ENCODE measurements at regions of chr7 and their contacts with region 1.

Region 1: GRCh38 chr7:151519765-151520418 is at the start of gene RHEB:
- DNase-seq: peak; percentile 99
- H3K4me3 Mint-ChIP-seq: peak within 1 kb of the TSS; percentile 97
- H3K27ac Mint-ChIP-seq: peak within 1 kb of the TSS; percentile 97
- H3K4me1 Mint-ChIP-seq: peaks cover 36% of the 10 kb centered on the region
- H3K27me3 Mint-ChIP-seq: peaks cover 9% of the 10 kb centered on the region
- total RNA-seq, gene RHEB: 55.4 and 62.5 TPM in 2 replicates

Region 2: DNA sequence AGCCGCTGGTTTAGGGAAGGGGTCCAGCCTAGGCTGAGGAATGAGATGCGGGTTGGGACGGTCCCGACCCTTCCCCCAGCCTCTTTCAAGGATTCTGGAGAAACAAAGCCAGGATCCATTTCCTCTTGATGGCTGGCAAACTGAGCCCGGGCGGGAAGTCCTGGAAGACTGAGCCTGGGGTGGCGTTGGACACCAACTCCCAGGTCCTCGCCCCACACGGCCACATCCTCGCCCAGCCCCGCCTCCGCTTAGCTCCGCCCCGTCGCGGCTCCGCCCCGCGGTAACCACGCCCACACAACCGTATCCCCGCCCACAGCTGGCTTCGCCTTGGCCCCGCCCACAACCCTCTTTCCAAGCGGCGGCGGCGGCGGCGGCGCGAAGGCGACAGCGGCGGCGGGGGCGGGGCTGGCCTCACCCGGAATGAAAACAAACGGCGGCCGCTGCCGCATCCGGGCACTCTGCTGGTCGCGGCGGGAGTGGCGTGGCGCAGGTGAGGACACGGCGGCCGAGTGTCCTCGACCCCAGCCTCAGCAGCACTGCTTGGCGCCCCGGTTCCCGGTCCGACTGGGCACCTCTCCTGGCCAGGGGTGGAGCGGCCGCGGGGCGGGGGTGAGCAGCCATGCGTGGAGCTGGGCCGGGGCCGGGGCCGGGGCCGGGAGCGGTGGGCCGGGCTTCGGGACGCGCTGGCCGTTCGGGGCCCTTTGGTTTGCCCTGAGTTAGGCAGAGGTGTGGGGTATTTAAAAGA is 178.4 kb before region 1 on chr7 and contains the start of gene NUB1:
- intact Hi-C with region 1: loop called (anchors 1 kb)
- DNase-seq: peak; percentile 98
- H3K4me3 Mint-ChIP-seq: peak within 1 kb of the TSS; percentile 85
- H3K27ac Mint-ChIP-seq: peak within 1 kb of the TSS; percentile 87
- H3K4me1 Mint-ChIP-seq: peaks cover 22% of the 10 kb centered on the region
- H3K27me3 Mint-ChIP-seq: no peaks in the 10 kb centered on the region
- total RNA-seq, gene NUB1: 36.5 and 40.4 TPM in 2 replicates

Region 3: DNA sequence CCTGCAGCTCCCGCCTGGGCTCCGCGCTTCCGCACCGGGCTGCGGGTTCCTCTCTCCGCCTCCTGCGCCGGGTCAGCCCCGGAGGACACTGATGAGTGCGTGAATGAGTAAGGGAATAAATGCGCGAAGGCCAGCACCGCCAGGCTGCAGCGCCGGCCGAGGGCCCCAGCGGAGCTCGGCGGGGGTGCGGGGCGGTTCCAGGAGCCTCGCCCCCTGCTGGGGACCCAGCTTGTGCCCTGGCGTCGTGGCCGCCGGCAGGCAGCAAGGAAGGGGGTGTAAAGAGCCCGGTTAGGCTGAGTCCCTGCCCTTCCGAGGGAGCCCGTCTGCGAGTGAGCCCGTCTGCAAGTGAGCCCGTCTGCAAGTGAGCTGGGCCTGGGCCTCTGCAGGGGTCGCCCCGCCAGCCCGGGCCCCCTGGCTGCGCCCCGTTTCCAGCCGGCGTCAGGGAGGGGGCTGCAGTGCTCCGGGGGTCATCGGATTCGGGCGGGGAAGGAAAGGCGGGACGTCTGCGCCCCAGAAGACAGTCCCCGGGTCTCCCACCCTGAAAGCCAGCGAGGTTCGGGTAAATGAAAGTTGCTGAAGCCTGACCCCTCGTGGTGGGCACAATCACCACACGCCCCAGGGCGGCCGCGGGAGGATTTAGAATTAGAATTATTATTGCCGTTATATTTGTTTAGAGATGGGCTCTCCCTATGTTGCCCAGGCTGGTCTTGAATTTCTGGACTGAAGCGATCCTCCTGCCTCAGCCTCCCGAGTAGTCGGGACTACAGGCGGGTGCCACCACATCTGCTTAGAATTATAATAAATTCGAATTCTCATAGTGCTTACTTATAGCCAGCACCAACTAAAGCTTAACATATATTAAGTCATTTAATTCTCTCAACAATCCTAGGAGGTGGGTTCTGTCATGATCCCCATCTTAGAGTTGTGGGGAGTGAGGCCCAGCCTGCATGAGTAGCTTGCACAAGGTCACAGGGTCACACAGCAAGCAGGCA is 71.3 kb before region 1 on chr7:
- intact Hi-C with region 1: no loop called
- DNase-seq: peak; percentile 93
- H3K4me3 Mint-ChIP-seq: peak overlapping the region; percentile 65
- H3K27ac Mint-ChIP-seq: no peak overlapping the region
- H3K4me1 Mint-ChIP-seq: peaks cover 4% of the 10 kb centered on the region
- H3K27me3 Mint-ChIP-seq: peaks cover 18% of the 10 kb centered on the region

Region 4: GRCh38 chr7:151472644-151473380 is 47.1 kb before region 1 on chr7:
- intact Hi-C with region 1: loop called (anchors 1 kb)
- DNase-seq: peak; percentile 52
- H3K4me3 Mint-ChIP-seq: no peak overlapping the region
- H3K27ac Mint-ChIP-seq: no peak overlapping the region
- H3K4me1 Mint-ChIP-seq: peaks cover 39% of the 10 kb centered on the region
- H3K27me3 Mint-ChIP-seq: no peaks in the 10 kb centered on the region

Region 5: GRCh38 chr7:151503902-151504714 is 15.8 kb before region 1 on chr7:
- intact Hi-C with region 1: no loop called
- DNase-seq: no peak
- H3K4me3 Mint-ChIP-seq: no peak overlapping the region
- H3K27ac Mint-ChIP-seq: no peak overlapping the region
- H3K4me1 Mint-ChIP-seq: peaks cover 25% of the 10 kb centered on the region
- H3K27me3 Mint-ChIP-seq: no peaks in the 10 kb centered on the region

Region 6: GRCh38 chr7:151759591-151760042 is 239.7 kb after region 1 on chr7:
- intact Hi-C with region 1: loop called (anchors 1 kb)
- DNase-seq: peak; percentile 87
- H3K4me3 Mint-ChIP-seq: no peak overlapping the region
- H3K27ac Mint-ChIP-seq: no peak overlapping the region
- H3K4me1 Mint-ChIP-seq: peaks cover 16% of the 10 kb centered on the region
- H3K27me3 Mint-ChIP-seq: peaks cover 5% of the 10 kb centered on the region

Region 7: GRCh38 chr7:152025077-152025936 is 505.4 kb after region 1 on chr7 and contains the start of gene GALNT11:
- intact Hi-C with region 1: loop called (anchors 10 kb)
- DNase-seq: peak; percentile 97
- H3K4me3 Mint-ChIP-seq: peak within 1 kb of the TSS; percentile 88
- H3K27ac Mint-ChIP-seq: peak within 1 kb of the TSS; percentile 85
- H3K4me1 Mint-ChIP-seq: peaks cover 23% of the 10 kb centered on the region
- H3K27me3 Mint-ChIP-seq: peaks cover 16% of the 10 kb centered on the region
- total RNA-seq, gene GALNT11: 22.0 and 22.1 TPM in 2 replicates

Region 8: GRCh38 chr7:152675759-152676636 is 1156.1 kb after region 1 on chr7 and contains the start of gene XRCC2:
- intact Hi-C with region 1: loop called (anchors 5 kb)
- DNase-seq: peak; percentile 99
- H3K4me3 Mint-ChIP-seq: peak within 1 kb of the TSS; percentile 94
- H3K27ac Mint-ChIP-seq: peak within 1 kb of the TSS; percentile 97
- H3K4me1 Mint-ChIP-seq: peaks cover 14% of the 10 kb centered on the region
- H3K27me3 Mint-ChIP-seq: no peaks in the 10 kb centered on the region
- total RNA-seq, gene XRCC2: 26.2 and 28.5 TPM in 2 replicates